GM10248 (cell line): ENCODE measurements at regions of chr5 and their contacts with region 1.

Region 1: GRCh38 chr5:122774861-122775549 is at the start of gene SNX2:
- DNase-seq: peak; percentile 92
- CTCF ChIP-seq: no peak

Region 2: GRCh38 chr5:122788996-122789395 is 14.0 kb after region 1 on chr5:
- CTCF ChIA-PET with region 1: interaction called, 33 read pairs
- POLR2A ChIA-PET with region 1: no interaction called
- DNase-seq: no peak
- CTCF ChIP-seq: no peak

Region 3: GRCh38 chr5:123265551-123265950 is 490.5 kb after region 1 on chr5:
- CTCF ChIA-PET with region 1: no interaction called
- POLR2A ChIA-PET with region 1: no interaction called
- DNase-seq: no peak
- CTCF ChIP-seq: no peak